Activated T-helper 1 cell treated with anti-CD3 and anti-CD28 coated beads, Interleukin-12 subunit alpha, Interleukin-12 subunit beta, Interleukin-2, Interleukin-4 antibody, amounts not matched to agents 30 ng/mL and 10 ng/mL and 1 ng/mL, durations not matched to agents 14 hours and 24 hours and 36 hours (primary cell): ENCODE measurements at regions of chr2 and their contacts with region 1.

Region 1: DNA sequence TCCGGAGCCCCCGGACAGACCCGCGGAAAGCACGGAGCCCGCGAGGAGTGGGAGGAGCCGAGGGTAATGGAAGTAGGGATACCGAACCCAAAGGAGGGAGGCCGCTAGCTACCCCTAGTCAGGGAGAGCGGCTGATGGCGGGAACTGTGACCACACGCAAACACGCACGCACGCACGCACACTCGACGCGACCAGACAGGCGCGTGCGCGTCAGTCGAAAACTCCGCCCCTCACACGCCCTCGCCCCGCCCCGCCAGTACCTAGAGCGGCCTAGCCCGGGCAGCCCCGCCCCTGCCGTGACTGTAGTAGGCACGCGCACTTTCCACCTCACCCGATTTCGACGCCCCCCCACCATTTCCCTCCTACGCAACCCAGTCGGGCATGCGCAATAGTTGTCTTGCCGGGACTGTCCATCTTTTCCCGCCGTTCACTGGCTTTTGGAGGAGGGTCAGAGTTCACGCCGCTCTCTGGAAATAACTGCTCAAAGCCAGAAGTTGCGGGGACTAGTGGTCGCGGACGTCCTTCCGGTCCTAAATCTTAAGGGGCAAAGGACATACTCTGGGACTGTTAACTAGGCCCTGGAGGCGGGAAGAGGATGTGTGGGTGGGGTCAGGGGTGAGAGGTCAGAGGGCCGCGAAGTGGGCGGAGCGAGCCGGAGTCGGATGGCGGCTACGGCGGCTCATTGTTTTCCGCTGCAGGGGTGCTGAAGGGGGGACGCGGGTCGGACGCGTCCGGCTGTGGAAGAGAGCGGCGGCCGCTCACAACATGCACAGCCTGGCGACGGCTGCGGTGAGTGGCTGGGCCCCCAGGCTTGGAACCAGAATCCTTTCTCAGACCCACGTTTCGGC is at the starts of genes CNOT9 and USP37:
- DNase-seq: peak; percentile 100
- H3K4me3 Mint-ChIP-seq: peak within 1 kb of the TSS; percentile 94
- H3K27ac Mint-ChIP-seq: peak within 1 kb of the TSS; percentile 99
- H3K4me1 Mint-ChIP-seq: peaks cover 59% of the 10 kb centered on the region
- H3K27me3 Mint-ChIP-seq: peaks cover 3% of the 10 kb centered on the region
- total RNA-seq, gene CNOT9: 138 TPM in 2 replicates
- total RNA-seq, gene USP37: 43.5 and 50.4 TPM in 2 replicates

Region 2: DNA sequence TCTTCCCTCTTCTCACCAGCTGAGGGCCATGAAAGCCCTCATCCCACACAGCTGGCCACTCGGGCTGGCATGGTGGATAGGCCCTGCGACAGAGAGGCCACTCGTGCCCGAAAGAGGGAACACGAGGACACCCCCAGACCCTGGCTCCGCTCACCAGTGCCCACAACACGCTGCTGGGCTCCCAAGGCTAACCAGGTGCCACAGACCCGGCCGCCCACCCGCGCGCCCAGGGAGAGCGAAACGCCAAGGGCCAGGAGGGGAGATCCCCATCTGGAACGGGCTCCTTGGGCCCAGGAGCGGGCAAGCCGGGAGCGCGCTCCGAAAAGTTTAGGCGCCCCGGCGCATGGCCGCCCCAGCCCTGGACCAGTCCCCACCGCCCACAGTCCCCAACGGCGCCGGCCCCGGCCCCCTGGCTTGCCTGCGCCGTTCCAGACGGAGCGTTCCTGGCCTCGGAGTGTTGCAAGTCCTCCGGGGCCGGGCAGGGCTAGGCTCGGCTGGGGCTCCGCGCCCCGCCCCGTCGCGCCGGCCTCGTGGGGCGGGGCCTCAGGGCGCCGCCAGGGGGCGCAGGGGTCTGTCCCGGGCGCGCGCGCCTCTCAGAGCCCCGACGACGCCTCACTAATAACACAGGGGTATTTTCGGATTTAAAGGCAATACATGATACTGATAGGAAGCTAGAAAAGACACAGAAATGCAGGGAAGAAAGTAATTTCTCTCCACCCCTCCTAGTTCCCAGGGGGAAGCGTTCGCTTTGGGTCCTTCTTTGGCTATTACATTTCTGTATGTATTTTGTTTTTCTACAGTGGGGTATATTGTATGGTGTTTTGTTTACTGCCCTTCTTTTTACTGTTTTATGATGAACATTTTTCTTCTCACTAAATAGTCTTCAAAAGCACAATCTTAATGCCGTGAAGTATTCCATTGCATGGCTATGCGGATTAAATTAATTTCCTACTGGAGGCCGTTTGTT is 276.1 kb before region 1 on chr2 and contains the start of gene TMBIM1:
- intact Hi-C with region 1: loop called (anchors 1 kb)
- DNase-seq: peak; percentile 79
- H3K4me3 Mint-ChIP-seq: peak within 1 kb of the TSS; percentile 88
- H3K27ac Mint-ChIP-seq: peak within 1 kb of the TSS; percentile 94
- H3K4me1 Mint-ChIP-seq: peaks cover 57% of the 10 kb centered on the region
- H3K27me3 Mint-ChIP-seq: no peaks in the 10 kb centered on the region
- total RNA-seq, gene TMBIM1: 66.2 and 70.5 TPM in 2 replicates

Region 3: DNA sequence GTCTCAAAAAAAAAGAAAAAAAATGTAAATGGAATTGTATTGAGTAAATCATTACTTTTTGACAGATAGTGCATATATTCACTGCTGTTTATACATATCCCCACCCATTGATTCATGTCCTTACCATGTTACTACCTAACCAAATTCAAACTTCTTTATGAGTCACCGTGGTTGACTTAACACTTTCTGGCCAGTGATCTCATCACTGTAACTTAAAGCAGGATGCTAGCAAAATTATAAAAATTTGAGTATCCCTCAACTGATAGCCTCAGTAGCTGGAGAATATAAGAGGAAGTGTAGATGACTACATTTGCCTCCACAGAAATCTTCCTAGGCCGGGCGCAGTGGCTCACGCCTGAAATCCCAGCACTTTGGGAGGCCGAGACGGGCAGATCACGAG is 13.7 kb after region 1 on chr2:
- intact Hi-C with region 1: loop called (anchors 1 kb)
- DNase-seq: no peak
- H3K4me3 Mint-ChIP-seq: peak overlapping the region; percentile 13
- H3K27ac Mint-ChIP-seq: peak overlapping the region; percentile 51
- H3K4me1 Mint-ChIP-seq: peaks cover 41% of the 10 kb centered on the region
- H3K27me3 Mint-ChIP-seq: no peaks in the 10 kb centered on the region

Region 4: DNA sequence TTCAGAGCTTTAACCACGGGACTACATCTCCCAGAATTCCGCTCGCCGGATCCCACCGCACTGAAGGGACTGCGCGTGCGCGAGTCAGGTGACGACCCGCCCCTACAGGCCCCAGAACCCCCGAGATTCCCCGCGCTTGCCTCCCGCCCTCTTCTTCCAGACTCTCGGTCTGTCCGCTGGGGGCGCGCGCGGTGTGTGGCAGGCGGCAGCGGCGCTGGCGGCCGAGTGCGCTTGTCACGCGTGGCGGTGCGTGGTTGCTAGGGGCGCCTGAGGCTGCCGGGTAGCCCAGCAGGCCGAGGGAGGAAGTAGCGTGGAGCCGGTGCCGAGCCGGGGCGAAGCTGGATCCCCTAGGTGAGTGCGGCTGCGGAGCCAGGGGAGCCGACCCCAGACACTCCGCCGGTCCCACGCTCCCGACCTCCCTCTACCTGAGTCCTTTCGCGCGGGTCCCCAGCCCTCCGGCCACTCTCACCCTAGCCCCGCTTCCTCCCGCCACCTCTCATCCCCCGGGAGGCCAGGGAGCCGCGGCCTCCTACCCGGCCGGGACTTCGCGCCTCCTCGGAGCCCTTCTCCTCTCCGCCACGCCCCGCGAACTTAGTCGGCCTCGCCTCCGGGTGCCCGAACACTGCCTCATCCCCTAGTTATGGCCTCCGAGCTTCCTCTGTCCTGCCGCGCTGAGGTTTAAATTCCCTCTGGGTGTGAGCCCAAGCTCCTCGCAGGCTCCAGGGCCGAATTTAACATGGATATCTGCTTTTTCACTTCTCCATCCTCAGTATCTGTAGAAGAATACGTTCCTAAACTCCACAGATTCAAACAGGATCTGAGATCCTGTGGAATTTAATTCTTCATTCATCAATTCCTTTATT is 142.5 kb after region 1 on chr2 and contains the start of gene TTLL4:
- intact Hi-C with region 1: loop called (anchors 1 kb)
- DNase-seq: peak; percentile 99
- H3K4me3 Mint-ChIP-seq: peak within 1 kb of the TSS; percentile 94
- H3K27ac Mint-ChIP-seq: peak within 1 kb of the TSS; percentile 87
- H3K4me1 Mint-ChIP-seq: peaks cover 27% of the 10 kb centered on the region
- H3K27me3 Mint-ChIP-seq: peaks cover 12% of the 10 kb centered on the region
- total RNA-seq, gene TTLL4: 70.6 and 78.3 TPM in 2 replicates

Region 5: GRCh38 chr2:219206442-219207253 is 638.2 kb after region 1 on chr2 and contains the start of gene ZFAND2B:
- intact Hi-C with region 1: loop called (anchors 2 kb)
- DNase-seq: peak; percentile 96
- H3K4me3 Mint-ChIP-seq: peak within 1 kb of the TSS; percentile 92
- H3K27ac Mint-ChIP-seq: peak within 1 kb of the TSS; percentile 99
- H3K4me1 Mint-ChIP-seq: peaks cover 40% of the 10 kb centered on the region
- H3K27me3 Mint-ChIP-seq: no peaks in the 10 kb centered on the region
- total RNA-seq, gene ZFAND2B: 35.0 and 41.3 TPM in 2 replicates